ENCODE measurements at regions of chr6 and their contacts with region 1.

Region 1: GRCh38 chr6:109036574-109037294 is 57.9 kb downstream of the SESN1 start:
- DNase-seq: peak in 3 of 14 experiments; percentile 40 to 75 (median 44)
- ATAC-seq: peak; percentile 51
- H3K4me3 ChIP-seq: no peak overlapping the region
- H3K4me3 Mint-ChIP-seq: peak overlapping the region; percentile 31
- H3K27ac ChIP-seq: peak overlapping the region in 1 of 2 donors; percentile 38
- H3K27ac Mint-ChIP-seq: peak overlapping the region; percentile 71
- H3K4me1 ChIP-seq: peaks cover 22% of the 10 kb centered on the region
- H3K4me1 Mint-ChIP-seq: peaks cover 63% of the 10 kb centered on the region
- H3K27me3 ChIP-seq: no peaks in the 10 kb centered on the region
- H3K27me3 Mint-ChIP-seq: no peaks in the 10 kb centered on the region
- CTCF ChIP-seq: no peak

Region 2: GRCh38 chr6:109015176-109015575 is 21.6 kb before region 1 on chr6:
- CTCF ChIA-PET with region 1: no interaction called
- POLR2A ChIA-PET with region 1: interaction called, 26 read pairs
- intact Hi-C with region 1: no loop called
- DNase-seq: peak in 1 of 14 experiments; percentile 13
- ATAC-seq: no peak
- H3K4me3 ChIP-seq: no peak overlapping the region
- H3K4me3 Mint-ChIP-seq: peak overlapping the region; percentile 26
- H3K27ac ChIP-seq: no peak overlapping the region
- H3K27ac Mint-ChIP-seq: peak overlapping the region; percentile 89
- H3K4me1 ChIP-seq: peaks cover 30% of the 10 kb centered on the region
- H3K4me1 Mint-ChIP-seq: peaks cover 73% of the 10 kb centered on the region
- H3K27me3 ChIP-seq: no peaks in the 10 kb centered on the region
- H3K27me3 Mint-ChIP-seq: no peaks in the 10 kb centered on the region
- CTCF ChIP-seq: no peak